CD8-positive, alpha-beta T cell (primary cell): ENCODE measurements at regions of chr2 and their contacts with region 1.

Region 1: DNA sequence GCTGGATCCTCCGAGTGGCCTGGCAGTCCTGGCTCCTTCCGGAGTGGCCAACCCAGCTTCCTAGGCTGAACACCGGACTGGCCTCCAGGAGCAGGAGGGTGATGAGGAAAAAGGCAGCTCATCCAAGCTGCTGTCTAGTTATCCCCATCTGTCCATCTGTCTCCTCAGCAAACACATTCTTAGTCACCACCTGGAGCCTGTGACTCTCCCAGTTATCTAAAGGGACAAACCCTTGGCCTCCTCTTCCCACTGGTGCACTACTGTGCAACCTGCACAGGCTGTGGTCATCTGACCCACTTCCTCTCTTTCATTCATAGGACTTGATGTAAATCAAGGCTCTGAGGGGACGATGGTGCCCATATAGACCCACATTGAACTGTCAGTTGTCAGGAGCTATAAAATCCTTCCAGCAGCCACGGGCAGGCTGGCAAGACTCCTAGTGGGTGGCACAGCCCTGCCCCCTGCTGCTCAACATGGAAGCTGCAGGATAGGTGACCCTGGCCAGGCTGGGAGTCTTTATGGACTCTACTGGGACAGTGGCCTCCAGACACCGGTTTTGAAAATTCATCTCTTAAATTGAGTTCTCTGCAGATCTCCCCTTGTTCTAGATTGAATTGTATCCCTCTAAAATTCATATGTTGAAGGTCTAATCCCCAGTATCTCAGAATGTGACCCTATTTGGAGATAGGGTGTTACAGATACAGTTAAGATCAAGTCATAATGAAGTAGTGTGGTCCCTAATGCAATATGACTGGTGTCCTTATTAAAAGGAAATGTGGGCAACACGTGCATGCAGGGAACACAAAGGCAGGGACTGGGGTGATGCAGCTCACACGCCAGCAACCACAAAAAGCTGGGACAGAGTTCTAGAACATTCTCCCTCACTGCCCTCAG is 29.3 kb upstream of the DUSP2 start:
- DNase-seq: peak; percentile 70 to 90 (median 84)
- ATAC-seq: peak; percentile 100
- H3K4me3 ChIP-seq: no peak overlapping the region
- H3K4me3 Mint-ChIP-seq: no peak overlapping the region
- H3K27ac ChIP-seq: no peak overlapping the region
- H3K27ac Mint-ChIP-seq: peak overlapping the region; percentile 72
- H3K4me1 ChIP-seq: peaks cover 7% of the 10 kb centered on the region
- H3K4me1 Mint-ChIP-seq: peaks cover 14% of the 10 kb centered on the region
- H3K27me3 ChIP-seq: no peaks in the 10 kb centered on the region
- H3K27me3 Mint-ChIP-seq: no peaks in the 10 kb centered on the region
- CTCF ChIP-seq: peak; percentile 96

Region 2: GRCh38 chr2:96116879-96117697 is 57.4 kb before region 1 on chr2:
- CTCF ChIA-PET with region 1: interaction called, 32 read pairs
- POLR2A ChIA-PET with region 1: interaction called, 3 read pairs
- intact Hi-C with region 1: no loop called
- DNase-seq: peak; percentile 31 to 81 (median 61)
- ATAC-seq: peak; percentile 72
- H3K4me3 ChIP-seq: peak overlapping the region; percentile 7 to 50
- H3K4me3 Mint-ChIP-seq: peak overlapping the region; percentile 76
- H3K27ac ChIP-seq: no peak overlapping the region
- H3K27ac Mint-ChIP-seq: peak overlapping the region; percentile 74
- H3K4me1 ChIP-seq: peaks cover 8% of the 10 kb centered on the region
- H3K4me1 Mint-ChIP-seq: peaks cover 12% of the 10 kb centered on the region
- H3K27me3 ChIP-seq: peaks cover 0 to 3% of the 10 kb centered on the region in 2 experiments
- H3K27me3 Mint-ChIP-seq: peaks cover 23% of the 10 kb centered on the region
- CTCF ChIP-seq: peak; percentile 84

Region 3: GRCh38 chr2:96138179-96139145 is 36.0 kb before region 1 on chr2 and contains the start of gene ASTL:
- CTCF ChIA-PET with region 1: interaction called, 775 read pairs
- POLR2A ChIA-PET with region 1: interaction called, 68 read pairs
- intact Hi-C with region 1: loop called (anchors 1 kb)
- DNase-seq: peak; percentile 50 to 86 (median 73)
- ATAC-seq: peak; percentile 30
- H3K4me3 ChIP-seq: no peak within 1 kb of the TSS
- H3K4me3 Mint-ChIP-seq: no peak within 1 kb of the TSS
- H3K27ac ChIP-seq: peak within 1 kb of the TSS in 1 of 2 experiments; percentile 59
- H3K27ac Mint-ChIP-seq: peak within 1 kb of the TSS; percentile 63
- H3K4me1 ChIP-seq: peaks cover 23% of the 10 kb centered on the region
- H3K4me1 Mint-ChIP-seq: peaks cover 31% of the 10 kb centered on the region
- H3K27me3 ChIP-seq: no peaks in the 10 kb centered on the region
- H3K27me3 Mint-ChIP-seq: no peaks in the 10 kb centered on the region
- CTCF ChIP-seq: peak; percentile 52
- total RNA-seq, gene ASTL: 16.6 to 17.5 TPM

Region 4: GRCh38 chr2:96157651-96158553 is 16.6 kb before region 1 on chr2:
- CTCF ChIA-PET with region 1: interaction called, 775 read pairs
- POLR2A ChIA-PET with region 1: interaction called, 16 read pairs
- intact Hi-C with region 1: loop called in 1 of 2 experiments (anchors 2 kb)
- DNase-seq: peak in 8 of 9 experiments; percentile 65 to 92 (median 84)
- ATAC-seq: peak; percentile 81
- H3K4me3 ChIP-seq: peak overlapping the region; percentile 12 to 32
- H3K4me3 Mint-ChIP-seq: peak overlapping the region; percentile 73
- H3K27ac ChIP-seq: peak overlapping the region; percentile 40 to 88
- H3K27ac Mint-ChIP-seq: peak overlapping the region; percentile 92
- H3K4me1 ChIP-seq: peaks cover 69% of the 10 kb centered on the region
- H3K4me1 Mint-ChIP-seq: peaks cover 83% of the 10 kb centered on the region
- H3K27me3 ChIP-seq: no peaks in the 10 kb centered on the region
- H3K27me3 Mint-ChIP-seq: no peaks in the 10 kb centered on the region
- CTCF ChIP-seq: no peak

Region 5: DNA sequence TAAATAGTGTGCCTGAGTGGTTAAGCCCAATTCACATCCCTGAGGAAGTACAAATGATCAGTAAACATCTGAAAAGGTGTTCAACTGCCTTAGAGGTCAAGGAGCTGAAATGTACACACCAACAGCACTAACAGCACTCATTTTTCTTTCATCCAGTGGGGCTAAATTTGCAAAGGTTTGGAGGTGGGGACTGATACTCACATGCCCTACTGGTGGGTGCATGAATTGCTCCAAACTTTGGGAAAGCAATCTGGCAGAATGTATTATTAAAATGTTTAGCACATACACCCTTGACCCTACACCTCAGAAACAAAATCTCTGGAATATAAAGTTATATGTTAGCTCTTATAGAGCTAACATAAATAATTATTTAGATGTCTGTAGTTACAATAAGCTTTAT is 830.9 kb after region 1 on chr2:
- CTCF ChIA-PET with region 1: no interaction called
- POLR2A ChIA-PET with region 1: no interaction called
- intact Hi-C with region 1: no loop called
- DNase-seq: peak in 2 of 9 experiments; percentile 13 to 17
- ATAC-seq: no peak
- H3K4me3 ChIP-seq: no peak overlapping the region
- H3K4me3 Mint-ChIP-seq: no peak overlapping the region
- H3K27ac ChIP-seq: no peak overlapping the region
- H3K27ac Mint-ChIP-seq: no peak overlapping the region
- H3K4me1 ChIP-seq: no peaks in the 10 kb centered on the region
- H3K4me1 Mint-ChIP-seq: no peaks in the 10 kb centered on the region
- H3K27me3 ChIP-seq: no peaks in the 10 kb centered on the region
- H3K27me3 Mint-ChIP-seq: peaks cover 2% of the 10 kb centered on the region
- CTCF ChIP-seq: no peak